Left ventricle myocardium inferior (tissue), 1 donor: ENCODE measurements at regions of chr22 and their contacts with region 1.

Region 1: GRCh38 chr22:32926600-32926999 is 125.1 kb downstream of the TIMP3 start:
- DNase-seq: no peak
- H3K4me3 ChIP-seq: no peak overlapping the region
- H3K27ac ChIP-seq: no peak overlapping the region
- H3K4me1 ChIP-seq: no peaks in the 10 kb centered on the region
- H3K27me3 ChIP-seq: no peaks in the 10 kb centered on the region
- CTCF ChIP-seq: peak; percentile 79

Region 2: DNA sequence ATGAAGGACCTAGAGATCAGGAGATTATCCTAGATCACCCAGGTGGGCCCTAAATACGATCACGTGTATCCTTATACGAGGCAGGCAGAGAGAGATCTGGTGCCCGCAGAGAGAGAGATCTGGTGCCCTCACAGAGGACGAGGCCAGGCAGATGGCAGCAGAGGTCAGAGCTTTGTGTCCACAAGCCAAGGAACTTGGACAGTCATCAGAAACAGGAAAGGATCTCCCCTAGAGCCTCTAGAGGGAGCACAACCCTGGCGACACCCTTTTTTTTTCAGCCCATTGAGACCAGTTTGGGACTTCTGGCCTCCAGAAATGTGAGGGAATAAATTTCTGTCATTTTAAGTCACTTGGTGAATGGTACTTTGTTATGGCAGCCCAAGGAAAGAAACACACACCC is 150.6 kb before region 1 on chr22:
- intact Hi-C with region 1: no loop called
- DNase-seq: no peak
- H3K4me3 ChIP-seq: no peak overlapping the region
- H3K27ac ChIP-seq: no peak overlapping the region
- H3K4me1 ChIP-seq: peaks cover 3% of the 10 kb centered on the region
- H3K27me3 ChIP-seq: no peaks in the 10 kb centered on the region
- CTCF ChIP-seq: peak; percentile 55

Region 3: DNA sequence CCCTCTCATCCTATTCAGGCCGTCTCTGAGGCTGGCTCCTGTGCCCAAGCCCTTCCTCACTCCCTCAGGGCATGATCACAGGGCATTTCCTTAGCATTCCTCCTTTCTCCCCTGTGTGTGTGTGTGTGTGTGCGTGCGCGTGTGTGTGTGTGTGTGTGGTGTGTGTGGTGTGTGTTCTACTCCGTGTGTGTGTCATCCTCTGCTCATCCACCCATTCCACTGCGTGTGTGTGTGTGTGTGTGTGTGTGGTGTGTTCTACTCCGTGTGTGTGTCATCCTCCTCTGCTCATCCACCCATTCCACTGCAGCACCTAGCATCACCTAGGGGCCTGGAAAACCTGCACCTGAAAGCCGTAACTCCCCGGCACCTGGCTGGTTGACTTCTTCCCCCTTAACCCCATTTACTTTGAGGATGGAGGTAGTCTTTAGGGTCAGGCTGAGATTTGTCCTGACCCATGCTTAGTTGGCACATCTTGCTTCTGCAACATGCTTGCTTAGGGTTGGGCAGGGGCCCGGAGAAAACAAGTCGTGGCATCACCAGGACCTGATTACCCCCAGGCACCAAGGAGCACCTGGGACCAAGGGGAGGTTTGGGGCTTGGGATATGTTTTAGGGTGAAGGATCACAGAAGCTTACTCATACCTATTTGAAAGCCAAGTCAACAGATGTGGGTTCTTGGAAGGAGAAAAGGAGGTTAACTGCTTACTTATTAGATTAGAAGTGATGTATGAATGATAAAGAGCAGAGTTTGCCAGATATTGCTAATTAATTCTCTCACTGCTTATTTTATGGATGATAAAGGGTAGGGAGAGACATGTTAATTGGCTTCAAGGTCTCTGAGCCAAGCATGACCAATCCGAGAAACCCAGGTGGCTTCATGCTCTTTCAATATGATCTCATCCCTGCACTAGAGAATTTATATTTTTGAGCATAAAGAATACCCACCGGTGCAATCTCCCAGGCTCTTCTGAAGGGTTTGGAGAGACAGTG is 106.2 kb before region 1 on chr22:
- intact Hi-C with region 1: no loop called
- DNase-seq: no peak
- H3K4me3 ChIP-seq: no peak overlapping the region
- H3K27ac ChIP-seq: peak overlapping the region; percentile 78
- H3K4me1 ChIP-seq: peaks cover 98% of the 10 kb centered on the region
- H3K27me3 ChIP-seq: no peaks in the 10 kb centered on the region
- CTCF ChIP-seq: no peak

Region 4: GRCh38 chr22:32985899-32986765 is 59.5 kb after region 1 on chr22:
- intact Hi-C with region 1: loop called (anchors 10 kb)
- DNase-seq: peak; percentile 51
- H3K4me3 ChIP-seq: no peak overlapping the region
- H3K27ac ChIP-seq: peak overlapping the region; percentile 18
- H3K4me1 ChIP-seq: peaks cover 10% of the 10 kb centered on the region
- H3K27me3 ChIP-seq: no peaks in the 10 kb centered on the region
- CTCF ChIP-seq: peak; percentile 97

Region 5: GRCh38 chr22:33314316-33314715 is 387.7 kb after region 1 on chr22:
- intact Hi-C with region 1: no loop called
- DNase-seq: no peak
- H3K4me3 ChIP-seq: no peak overlapping the region
- H3K27ac ChIP-seq: no peak overlapping the region
- H3K4me1 ChIP-seq: no peaks in the 10 kb centered on the region
- H3K27me3 ChIP-seq: no peaks in the 10 kb centered on the region
- CTCF ChIP-seq: no peak